ENCODE measurements at regions of chr1 and their contacts with region 1.

Region 1: GRCh38 chr1:12619792-12620487 is 1.9 kb upstream of the DHRS3 start:
- DNase-seq: peak; percentile 78

Region 2: DNA sequence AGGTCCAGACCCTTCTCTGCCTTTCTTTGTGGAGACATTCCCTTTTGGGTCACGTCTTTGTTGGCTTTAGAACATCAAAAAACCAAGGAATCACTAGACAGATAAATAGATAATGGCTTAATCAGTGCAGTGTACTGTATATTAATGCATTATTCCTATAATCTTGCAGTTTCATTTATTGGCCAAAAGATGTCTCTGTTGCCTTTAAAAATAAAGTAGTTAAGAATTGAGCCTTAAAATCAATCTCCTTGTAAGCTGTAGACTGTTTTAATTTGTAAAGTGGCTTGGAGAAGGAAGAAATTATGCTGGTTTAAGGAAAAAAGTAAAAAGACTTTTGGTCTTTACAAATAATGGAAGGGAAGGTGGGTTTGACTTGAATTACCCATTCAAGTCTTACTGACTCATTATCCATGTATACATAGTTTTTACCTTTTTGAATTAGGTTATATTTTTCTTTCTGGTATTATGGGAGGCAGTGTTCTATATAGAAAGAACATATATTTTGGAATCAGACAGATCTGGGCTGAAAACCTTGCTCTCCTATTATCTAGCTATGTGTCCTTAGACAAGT is 305.5 kb before region 1 on chr1:
- in situ Hi-C with region 1: loop called (anchors 25 kb)
- DNase-seq: peak; percentile 19

Region 3: DNA sequence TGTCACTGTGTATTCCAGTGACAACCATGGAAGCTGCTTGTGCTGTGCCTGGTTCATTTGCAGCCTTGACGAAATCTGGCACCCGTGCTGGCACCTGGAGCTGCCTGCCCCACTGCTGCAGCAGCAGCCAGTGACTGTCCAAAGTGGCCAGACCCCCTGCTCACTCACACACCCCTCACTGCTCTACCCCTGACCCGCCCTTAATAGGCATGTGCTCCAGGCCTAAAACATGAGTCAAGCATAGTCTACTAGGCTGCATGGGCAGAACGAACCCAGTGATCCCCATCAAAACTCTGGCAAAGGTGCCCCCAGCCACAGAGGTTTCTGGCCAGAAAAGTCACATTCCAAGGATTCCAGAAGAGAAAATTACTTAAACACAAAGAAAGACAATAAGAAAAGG is 179.0 kb after region 1 on chr1:
- in situ Hi-C with region 1: no loop called
- DNase-seq: no peak